ENCODE measurements at regions of chr3 and their contacts with region 1.

Region 1: DNA sequence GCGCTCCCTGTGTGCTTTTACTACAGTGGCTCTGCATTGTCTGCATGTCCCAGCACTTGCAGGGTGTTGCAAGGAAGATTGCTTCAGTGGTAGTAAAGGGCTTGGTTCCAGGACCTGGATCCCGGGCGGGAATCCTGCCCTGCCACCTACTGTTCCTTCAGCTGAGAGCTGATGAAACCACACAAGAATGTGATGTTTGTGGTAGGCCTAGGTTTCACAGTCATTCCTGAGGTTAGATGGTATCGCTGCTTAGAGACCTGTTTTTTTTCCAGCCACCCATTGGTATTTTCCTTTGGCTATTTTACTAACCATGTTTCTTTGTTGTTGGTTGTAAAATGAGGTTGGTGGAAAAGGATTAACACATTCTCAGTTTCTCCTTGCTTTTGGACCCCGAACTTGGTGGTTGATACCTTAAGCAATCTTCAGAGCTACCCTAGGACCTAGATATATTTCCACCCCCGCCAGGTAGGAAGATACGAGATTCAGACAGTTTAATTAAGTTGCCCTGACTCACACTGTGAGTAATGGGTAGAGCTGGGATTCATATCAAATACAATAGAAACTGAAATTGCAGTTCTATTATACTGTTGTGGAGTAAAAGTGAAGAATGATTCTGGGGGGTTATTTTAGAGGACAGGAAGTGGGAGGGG is 11.4 kb downstream of the GPR87 start:
- DNase-seq: peak; percentile 91 to 93
- H3K4me3 ChIP-seq: no peak overlapping the region
- H3K4me3 Mint-ChIP-seq: peak overlapping the region; percentile 40
- H3K27ac Mint-ChIP-seq: peak overlapping the region; percentile 82
- H3K4me1 ChIP-seq: peaks cover 13% of the 10 kb centered on the region
- H3K4me1 Mint-ChIP-seq: peaks cover 31% of the 10 kb centered on the region
- H3K27me3 ChIP-seq: no peaks in the 10 kb centered on the region
- H3K27me3 Mint-ChIP-seq: no peaks in the 10 kb centered on the region
- CTCF ChIP-seq: peak in 1 of 2 experiments; percentile 65

Region 2: GRCh38 chr3:151146071-151146730 is 159.0 kb before region 1 on chr3:
- CTCF ChIA-PET with region 1: no interaction called
- POLR2A ChIA-PET with region 1: no interaction called
- intact Hi-C with region 1: no loop called
- DNase-seq: peak; percentile 77 to 80
- H3K4me3 ChIP-seq: no peak overlapping the region
- H3K4me3 Mint-ChIP-seq: no peak overlapping the region
- H3K27ac Mint-ChIP-seq: no peak overlapping the region
- H3K4me1 ChIP-seq: peaks cover 32% of the 10 kb centered on the region
- H3K4me1 Mint-ChIP-seq: peaks cover 30% of the 10 kb centered on the region
- H3K27me3 ChIP-seq: no peaks in the 10 kb centered on the region
- H3K27me3 Mint-ChIP-seq: no peaks in the 10 kb centered on the region
- CTCF ChIP-seq: peak; percentile 81 to 88

Region 3: DNA sequence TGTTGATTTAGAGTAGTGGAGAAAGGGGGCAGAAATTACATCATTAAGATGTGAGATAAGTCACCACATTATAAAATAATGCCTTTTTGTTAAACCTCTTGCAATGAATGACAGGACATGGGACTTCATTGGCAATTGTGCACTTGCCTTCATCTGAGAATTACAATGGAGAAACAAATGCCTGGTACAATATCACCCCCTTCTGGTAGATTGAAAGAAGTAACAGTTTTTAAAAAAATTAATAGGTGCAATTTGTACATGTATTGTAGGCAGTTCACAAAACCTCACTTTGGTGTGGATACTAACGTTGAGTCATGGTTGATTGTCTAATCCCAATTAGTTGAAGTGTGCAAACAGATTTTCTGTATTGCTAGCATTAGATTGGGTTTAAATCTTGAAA is 22.3 kb before region 1 on chr3:
- CTCF ChIA-PET with region 1: no interaction called
- POLR2A ChIA-PET with region 1: no interaction called
- intact Hi-C with region 1: loop called (anchors 1 kb)
- DNase-seq: peak in 1 of 2 experiments; percentile 44
- H3K4me3 ChIP-seq: no peak overlapping the region
- H3K4me3 Mint-ChIP-seq: no peak overlapping the region
- H3K27ac Mint-ChIP-seq: no peak overlapping the region
- H3K4me1 ChIP-seq: peaks cover 9% of the 10 kb centered on the region
- H3K4me1 Mint-ChIP-seq: peaks cover 7% of the 10 kb centered on the region
- H3K27me3 ChIP-seq: no peaks in the 10 kb centered on the region
- H3K27me3 Mint-ChIP-seq: no peaks in the 10 kb centered on the region
- CTCF ChIP-seq: peak; percentile 56 to 60

Region 4: GRCh38 chr3:152127058-152127457 is 821.8 kb after region 1 on chr3:
- CTCF ChIA-PET with region 1: no interaction called
- POLR2A ChIA-PET with region 1: no interaction called
- intact Hi-C with region 1: no loop called
- DNase-seq: no peak
- H3K4me3 ChIP-seq: no peak overlapping the region
- H3K4me3 Mint-ChIP-seq: no peak overlapping the region
- H3K27ac Mint-ChIP-seq: no peak overlapping the region
- H3K4me1 ChIP-seq: no peaks in the 10 kb centered on the region
- H3K4me1 Mint-ChIP-seq: no peaks in the 10 kb centered on the region
- H3K27me3 ChIP-seq: no peaks in the 10 kb centered on the region
- H3K27me3 Mint-ChIP-seq: no peaks in the 10 kb centered on the region
- CTCF ChIP-seq: no peak